ENCODE measurements at regions of chr3 and their contacts with region 1.

Region 1: GRCh38 chr3:114290911-114291901 is 2.6 kb upstream of the TIGIT start:
- DNase-seq: peak; percentile 85
- CTCF ChIP-seq: peak; percentile 90

Region 2: GRCh38 chr3:114270019-114270418 is 21.2 kb before region 1 on chr3:
- CTCF ChIA-PET with region 1: interaction called, 16 read pairs
- POLR2A ChIA-PET with region 1: no interaction called
- DNase-seq: no peak
- CTCF ChIP-seq: no peak

Region 3: DNA sequence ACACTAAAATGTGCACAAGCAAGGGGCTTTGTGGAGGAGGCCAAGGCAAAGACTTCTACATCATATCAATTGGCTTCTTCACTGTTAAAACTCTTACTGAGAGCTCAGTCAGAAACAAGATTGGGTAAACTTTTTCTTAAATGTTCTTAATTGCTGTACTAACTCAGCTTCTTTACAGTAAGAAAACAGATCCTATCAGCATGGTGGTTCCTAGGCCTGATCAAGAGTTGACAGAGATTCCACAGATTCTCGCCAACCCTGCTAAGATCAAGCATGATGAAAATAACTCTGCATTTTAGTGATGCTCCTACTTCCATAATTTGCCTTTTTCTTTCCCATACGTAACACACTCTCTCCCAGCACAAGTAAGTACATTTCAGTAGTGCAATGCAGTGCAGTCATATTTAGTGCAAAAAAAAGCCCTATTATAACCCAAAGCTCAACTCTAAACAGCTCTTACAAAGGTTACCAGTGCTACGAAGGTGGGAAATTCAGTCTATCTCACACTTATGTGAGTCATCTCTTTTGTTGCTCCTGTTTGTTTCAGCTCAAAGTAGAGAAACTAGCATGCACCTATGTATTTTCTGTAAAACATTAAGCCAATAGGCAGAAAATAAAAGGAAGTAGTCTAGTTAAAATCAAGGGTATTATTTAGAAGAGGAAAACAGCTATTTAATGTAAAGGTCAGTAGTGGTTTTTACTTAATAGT is 32.5 kb after region 1 on chr3:
- CTCF ChIA-PET with region 1: interaction called, 24 read pairs
- POLR2A ChIA-PET with region 1: no interaction called
- DNase-seq: no peak
- CTCF ChIP-seq: no peak

Region 4: DNA sequence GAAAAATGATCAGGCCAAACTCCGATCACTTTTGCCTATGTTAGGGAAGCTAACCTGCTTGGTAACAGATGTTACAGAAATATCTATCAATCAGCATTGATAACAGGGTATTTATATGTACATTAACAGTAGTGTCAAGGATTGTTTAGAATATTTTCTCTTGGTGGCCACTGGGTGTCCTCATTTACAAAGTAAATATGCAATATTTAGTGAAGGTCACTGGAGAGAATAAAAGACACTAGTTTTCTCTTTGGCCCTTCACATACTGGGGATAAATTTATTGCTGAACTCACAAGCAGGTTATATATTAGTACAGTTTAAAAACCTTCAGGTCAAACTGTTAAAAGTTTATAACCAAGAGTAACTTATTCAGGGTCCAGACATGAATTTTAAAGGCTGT is 71.6 kb after region 1 on chr3:
- CTCF ChIA-PET with region 1: interaction called, 24 read pairs
- POLR2A ChIA-PET with region 1: no interaction called
- DNase-seq: peak; percentile 24
- CTCF ChIP-seq: peak; percentile 44

Region 5: DNA sequence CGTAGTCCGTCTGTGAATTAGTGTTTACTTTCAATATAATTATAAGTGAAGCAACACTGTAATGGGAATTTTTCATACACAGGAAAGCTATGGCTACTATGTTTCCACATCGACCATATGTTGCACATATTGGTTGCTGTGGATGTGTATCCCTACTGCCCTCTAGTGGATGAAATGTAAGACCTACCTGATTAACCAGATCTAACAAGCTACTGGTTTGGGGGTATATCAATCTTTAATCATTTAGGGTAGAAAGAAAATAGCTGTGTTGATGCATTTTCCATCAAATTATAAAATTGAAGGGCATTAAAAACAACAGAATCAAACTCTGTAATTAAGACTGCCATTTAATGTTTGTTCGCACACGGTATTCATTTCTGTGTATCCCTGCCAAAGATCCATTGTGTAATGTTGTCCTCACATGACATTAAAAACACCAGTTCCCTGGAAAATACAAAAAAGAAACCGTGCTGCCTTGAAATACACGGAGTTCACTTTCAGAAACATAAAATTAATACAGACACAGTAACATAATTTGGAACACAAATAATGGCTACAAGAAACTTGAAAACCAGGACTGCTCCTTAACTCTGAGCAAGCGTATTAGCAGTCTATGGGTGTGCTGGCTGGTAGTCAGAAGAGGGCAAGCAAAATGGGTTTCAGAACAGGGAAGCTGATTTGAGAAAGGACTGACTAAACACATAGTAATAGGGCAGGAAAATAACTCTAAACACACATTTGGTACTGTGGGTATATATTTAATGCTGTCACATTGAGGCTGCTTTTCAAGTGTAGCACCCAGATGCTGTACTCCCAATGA is 127.7 kb after region 1 on chr3:
- CTCF ChIA-PET with region 1: interaction called, 58 read pairs
- POLR2A ChIA-PET with region 1: no interaction called
- DNase-seq: peak; percentile 29
- CTCF ChIP-seq: peak; percentile 71